ENCODE measurements at regions of chr9 and their contacts with region 1.

Region 1: GRCh38 chr9:2066312-2067273 is 51.4 kb downstream of the SMARCA2 start:
- DNase-seq: no peak
- H3K4me3 ChIP-seq: no peak overlapping the region
- H3K27ac ChIP-seq: no peak overlapping the region
- H3K4me1 ChIP-seq: no peaks in the 10 kb centered on the region
- H3K27me3 ChIP-seq: no peaks in the 10 kb centered on the region
- CTCF ChIP-seq: peak in 2 of 3 experiments; percentile 48 to 54; a peak in 3 of 4 replicates
- EP300 ChIP-seq: no peak
- POLR2A ChIP-seq: no peak
- RAD21 ChIP-seq: peak; percentile 77 to 83

Region 2: DNA sequence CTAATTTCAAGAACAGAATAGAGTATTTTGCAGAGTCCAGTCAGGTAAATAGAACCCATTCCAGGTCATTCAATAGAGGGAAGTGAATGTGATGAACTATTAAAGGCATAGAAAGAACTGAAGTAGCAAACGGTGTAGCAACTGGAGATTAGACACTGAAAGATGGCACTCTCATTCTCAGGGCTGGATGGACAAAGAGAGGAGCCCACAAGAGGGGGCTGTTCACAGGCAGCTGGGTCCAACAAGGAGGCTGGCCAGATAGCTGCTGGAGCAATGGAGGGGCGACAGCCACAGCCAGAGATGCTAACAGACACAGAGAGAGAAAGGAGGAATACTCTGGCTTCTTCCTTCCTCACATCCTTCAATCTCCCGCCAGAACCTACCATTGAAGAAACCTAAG is 144.6 kb before region 1 on chr9:
- CTCF ChIA-PET with region 1: interaction called, 10 read pairs
- POLR2A ChIA-PET with region 1: no interaction called
- DNase-seq: no peak
- H3K4me3 ChIP-seq: no peak overlapping the region
- H3K27ac ChIP-seq: no peak overlapping the region
- H3K4me1 ChIP-seq: peaks cover 2 to 7% (median 3%) of the 10 kb centered on the region in 4 experiments; a peak in 4 of 7 replicates
- H3K27me3 ChIP-seq: no peaks in the 10 kb centered on the region
- CTCF ChIP-seq: peak; percentile 24 to 55 (median 48)
- EP300 ChIP-seq: no peak
- POLR2A ChIP-seq: no peak
- RAD21 ChIP-seq: peak; percentile 55 to 67

Measured in H1 (cell line).